CD8-positive, alpha-beta memory T cell (primary cell): ENCODE measurements at regions of chr17 and their contacts with region 1.

Region 1: DNA sequence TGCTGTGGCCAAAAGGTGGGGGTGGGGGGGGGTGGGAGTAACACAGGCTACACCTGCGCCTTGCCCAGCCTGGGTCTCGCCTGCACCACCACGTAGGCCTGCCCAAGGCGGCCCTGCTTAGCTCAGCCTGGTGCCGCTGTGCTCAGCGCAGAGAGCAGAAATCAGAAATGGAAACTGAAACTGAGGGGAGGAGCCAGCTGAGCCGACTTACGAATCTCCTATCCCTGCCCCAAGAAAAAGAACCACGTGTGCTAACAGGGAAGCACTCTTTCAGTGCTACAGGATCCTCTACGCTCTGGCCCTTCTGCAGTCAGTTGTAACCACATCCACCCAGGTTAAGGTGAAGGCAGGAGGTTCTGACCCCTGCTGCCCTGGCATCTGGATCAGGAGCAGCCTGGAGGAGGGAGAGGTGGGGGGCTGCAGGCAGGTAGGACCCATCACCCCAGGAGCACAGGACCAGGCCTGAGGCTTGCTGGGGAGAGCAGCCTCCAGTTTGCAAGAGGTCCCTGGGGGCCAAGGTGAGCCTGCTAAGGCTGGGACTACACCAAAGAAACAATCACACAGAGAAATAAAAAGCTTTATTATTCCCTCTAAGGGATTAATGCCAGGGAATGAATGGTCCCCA is at the start of gene DHX58:
- DNase-seq: peak; percentile 55 to 86 (median 76)
- H3K4me3 ChIP-seq: peak within 1 kb of the TSS; percentile 76
- H3K4me3 Mint-ChIP-seq: peak within 1 kb of the TSS; percentile 81 to 93 (median 90)
- H3K27ac ChIP-seq: peak within 1 kb of the TSS; percentile 63
- H3K27ac Mint-ChIP-seq: peak within 1 kb of the TSS; percentile 86 to 98 (median 96)
- H3K4me1 ChIP-seq: peaks cover 27% of the 10 kb centered on the region
- H3K4me1 Mint-ChIP-seq: peaks cover 33 to 54% (median 34%) of the 10 kb centered on the region in 3 donors
- H3K27me3 ChIP-seq: no peaks in the 10 kb centered on the region
- H3K27me3 Mint-ChIP-seq: no peaks in the 10 kb centered on the region
- total RNA-seq, gene DHX58: 8.1 to 9.7 TPM

Region 2: GRCh38 chr17:41976142-41976768 is 136.4 kb before region 1 on chr17:
- CTCF ChIA-PET with region 1: no interaction called
- POLR2A ChIA-PET with region 1: no interaction called
- DNase-seq: no peak
- H3K4me3 ChIP-seq: no peak overlapping the region
- H3K4me3 Mint-ChIP-seq: no peak overlapping the region
- H3K27ac ChIP-seq: no peak overlapping the region
- H3K27ac Mint-ChIP-seq: peak overlapping the region in 3 of 8 donors; percentile 3 to 93 (median 5)
- H3K4me1 ChIP-seq: no peaks in the 10 kb centered on the region
- H3K4me1 Mint-ChIP-seq: peaks cover 2 to 16% (median 11%) of the 10 kb centered on the region in 3 donors
- H3K27me3 ChIP-seq: no peaks in the 10 kb centered on the region
- H3K27me3 Mint-ChIP-seq: no peaks in the 10 kb centered on the region

Region 3: GRCh38 chr17:42019509-42020404 is 92.9 kb before region 1 on chr17 and contains the start of gene NKIRAS2:
- CTCF ChIA-PET with region 1: interaction called, 109 read pairs
- POLR2A ChIA-PET with region 1: interaction called, 13 read pairs
- DNase-seq: peak; percentile 86 to 95 (median 92)
- H3K4me3 ChIP-seq: peak within 1 kb of the TSS; percentile 76
- H3K4me3 Mint-ChIP-seq: peak within 1 kb of the TSS; percentile 86 to 100 (median 97)
- H3K27ac ChIP-seq: peak within 1 kb of the TSS; percentile 68
- H3K27ac Mint-ChIP-seq: peak within 1 kb of the TSS; percentile 74 to 99 (median 90)
- H3K4me1 ChIP-seq: peaks cover 54% of the 10 kb centered on the region
- H3K4me1 Mint-ChIP-seq: peaks cover 55 to 69% (median 68%) of the 10 kb centered on the region in 3 donors
- H3K27me3 ChIP-seq: no peaks in the 10 kb centered on the region
- H3K27me3 Mint-ChIP-seq: peaks cover 0 to 2% of the 10 kb centered on the region in 2 donors
- total RNA-seq, gene NKIRAS2: 29.4 to 31.3 TPM

Region 4: DNA sequence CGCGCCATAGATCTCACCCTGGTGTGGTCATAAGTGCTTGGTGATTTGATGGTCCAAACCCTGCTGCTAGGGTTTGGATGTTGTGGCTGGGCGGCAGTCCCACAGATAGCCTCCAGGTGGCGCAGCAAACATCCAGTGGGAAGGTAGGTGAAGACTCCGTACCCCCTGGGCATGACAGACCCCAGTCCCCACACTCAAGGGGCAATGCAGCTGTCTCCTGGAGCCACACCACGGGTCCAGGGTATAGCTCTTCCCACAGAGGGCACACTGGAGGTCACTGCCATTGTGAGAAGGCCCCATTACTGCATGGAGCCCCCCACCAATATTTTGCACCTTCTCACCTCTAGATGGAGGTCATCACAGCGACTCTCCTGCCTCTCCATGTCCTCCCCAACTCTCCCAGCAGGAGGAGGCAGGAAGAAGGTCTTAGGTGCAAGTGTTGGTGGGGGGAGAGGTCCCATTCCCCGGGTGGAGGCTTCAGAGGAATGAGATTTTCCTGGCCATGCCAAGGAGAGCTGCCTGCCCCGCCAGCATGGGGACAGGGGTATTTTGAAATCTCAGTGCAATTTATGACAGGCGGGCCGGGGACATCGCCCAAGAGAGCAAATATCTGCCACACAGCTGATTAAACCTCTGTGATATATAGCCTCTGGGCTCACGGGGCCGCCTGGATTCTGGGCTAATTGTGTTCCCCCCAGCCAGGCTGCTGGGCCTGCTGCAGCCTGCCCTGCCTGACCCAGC is 45.1 kb before region 1 on chr17:
- CTCF ChIA-PET with region 1: interaction called, 57 read pairs
- POLR2A ChIA-PET with region 1: interaction called, 5 read pairs
- DNase-seq: peak; percentile 43 to 78 (median 62)
- H3K4me3 ChIP-seq: no peak overlapping the region
- H3K4me3 Mint-ChIP-seq: no peak overlapping the region
- H3K27ac ChIP-seq: no peak overlapping the region
- H3K27ac Mint-ChIP-seq: peak overlapping the region in 1 of 8 donors; percentile 60
- H3K4me1 ChIP-seq: peaks cover 20% of the 10 kb centered on the region
- H3K4me1 Mint-ChIP-seq: peaks cover 9 to 20% (median 13%) of the 10 kb centered on the region in 3 donors
- H3K27me3 ChIP-seq: peaks cover 9% of the 10 kb centered on the region
- H3K27me3 Mint-ChIP-seq: peaks cover 17 to 24% of the 10 kb centered on the region in 2 donors

Region 5: GRCh38 chr17:42101513-42102319 is 10.9 kb before region 1 on chr17:
- CTCF ChIA-PET with region 1: interaction called, 13 read pairs
- POLR2A ChIA-PET with region 1: no interaction called
- DNase-seq: peak in 4 of 5 donors; percentile 50 to 71 (median 55)
- H3K4me3 ChIP-seq: no peak overlapping the region
- H3K4me3 Mint-ChIP-seq: no peak overlapping the region
- H3K27ac ChIP-seq: no peak overlapping the region
- H3K27ac Mint-ChIP-seq: peak overlapping the region in 2 of 8 donors; percentile 17 to 95
- H3K4me1 ChIP-seq: peaks cover 6% of the 10 kb centered on the region
- H3K4me1 Mint-ChIP-seq: peaks cover 5 to 8% (median 6%) of the 10 kb centered on the region in 3 donors
- H3K27me3 ChIP-seq: peaks cover 14% of the 10 kb centered on the region
- H3K27me3 Mint-ChIP-seq: peaks cover 3 to 14% of the 10 kb centered on the region in 2 donors

Region 6: GRCh38 chr17:42266918-42267778 is 154.5 kb after region 1 on chr17:
- CTCF ChIA-PET with region 1: no interaction called
- POLR2A ChIA-PET with region 1: no interaction called
- DNase-seq: peak; percentile 38 to 87 (median 60)
- H3K4me3 ChIP-seq: no peak overlapping the region
- H3K4me3 Mint-ChIP-seq: peak overlapping the region in 4 of 7 donors; percentile 19 to 58 (median 40)
- H3K27ac ChIP-seq: peak overlapping the region; percentile 49
- H3K27ac Mint-ChIP-seq: peak overlapping the region; percentile 84 to 98 (median 94)
- H3K4me1 ChIP-seq: peaks cover 50% of the 10 kb centered on the region
- H3K4me1 Mint-ChIP-seq: peaks cover 56 to 74% (median 66%) of the 10 kb centered on the region in 3 donors
- H3K27me3 ChIP-seq: no peaks in the 10 kb centered on the region
- H3K27me3 Mint-ChIP-seq: no peaks in the 10 kb centered on the region